Astrocyte of the cerebellum (primary cell): ENCODE measurements at regions of chr6 and their contacts with region 1.

Region 1: DNA sequence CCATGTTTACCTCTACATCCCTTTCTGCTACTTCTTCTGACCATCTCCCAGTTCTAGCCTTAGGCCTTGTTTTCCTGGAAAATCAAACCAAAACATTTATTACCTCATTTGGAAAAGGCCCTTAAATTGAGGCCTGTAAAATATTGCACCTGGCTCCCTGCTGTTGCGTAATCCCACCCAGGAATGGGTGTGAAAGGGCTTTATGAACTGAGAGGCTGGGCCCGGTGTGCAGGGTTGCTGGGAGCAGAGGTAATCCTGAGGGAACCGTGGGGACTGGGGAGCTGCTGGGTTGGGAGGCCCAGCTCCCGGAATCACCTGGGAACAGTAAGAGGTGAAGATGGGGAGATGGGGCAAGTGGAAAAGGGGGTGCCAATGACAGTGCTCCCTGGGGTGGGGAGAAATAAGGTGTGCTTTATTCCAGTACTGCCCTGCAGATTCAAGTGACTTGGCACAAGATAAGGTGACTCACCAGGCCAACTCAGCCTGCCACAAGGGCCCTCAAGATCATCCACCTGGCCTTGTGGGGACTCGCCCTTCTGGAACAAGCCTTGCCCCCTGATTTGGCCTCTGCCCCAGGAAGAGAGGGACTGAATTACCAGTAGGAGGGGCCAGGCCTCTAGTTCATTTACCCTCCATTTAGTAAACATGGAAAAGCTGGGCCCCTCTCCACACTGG is 44.2 kb downstream of the KCNK5 start:
- DNase-seq: no peak
- H3K4me3 ChIP-seq: no peak overlapping the region
- CTCF ChIP-seq: no peak

Region 2: GRCh38 chr6:39088331-39088730 is 96.7 kb before region 1 on chr6:
- in situ Hi-C with region 1: no loop called
- DNase-seq: peak; percentile 59
- H3K4me3 ChIP-seq: no peak overlapping the region
- CTCF ChIP-seq: peak; percentile 69

Region 3: DNA sequence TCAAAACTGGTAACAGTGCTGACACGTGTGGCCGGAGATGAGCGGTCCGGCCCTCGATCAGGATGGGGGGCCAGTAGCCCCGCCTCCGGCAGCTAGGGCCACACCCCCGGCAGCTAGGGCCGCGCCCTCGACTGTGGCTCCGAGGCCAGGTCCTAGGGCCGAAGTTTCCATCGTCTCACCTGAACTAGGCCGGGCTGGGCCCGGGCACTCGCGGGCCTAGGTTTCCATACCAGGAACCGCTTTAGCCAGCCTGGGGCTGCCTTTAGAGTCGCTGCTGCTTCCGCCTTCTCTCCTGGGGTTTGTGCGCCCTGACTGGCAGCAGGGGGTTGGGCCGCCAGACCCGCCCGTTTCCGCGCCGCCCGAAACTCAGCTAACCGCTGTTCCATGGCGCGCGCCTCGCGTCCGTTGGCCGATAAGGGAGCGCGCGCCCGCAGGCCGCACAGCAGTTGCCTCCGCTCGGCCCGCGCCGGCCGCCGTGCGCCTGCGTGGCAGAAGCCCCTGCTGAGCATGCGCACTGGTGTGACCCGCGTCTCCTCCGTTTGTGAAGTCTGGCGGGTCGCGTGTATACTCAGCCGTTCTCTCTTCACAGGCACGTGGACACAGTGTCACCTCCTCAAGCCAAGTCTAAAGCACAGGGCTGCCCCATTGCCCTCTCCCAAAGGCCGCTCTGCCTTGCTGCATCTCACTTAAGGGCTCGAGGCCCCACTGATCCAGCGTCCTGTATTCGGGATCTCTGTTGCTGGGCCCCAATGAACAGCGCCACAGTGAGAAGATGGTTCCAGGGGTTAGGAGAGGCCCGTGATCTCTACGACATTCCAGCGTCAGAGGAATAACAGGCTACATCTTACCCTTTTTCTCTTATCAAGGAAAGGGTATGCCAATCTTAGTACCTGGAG is 70.1 kb before region 1 on chr6 and contains the start of gene SAYSD1:
- in situ Hi-C with region 1: loop called (anchors 5 kb)
- DNase-seq: peak; percentile 69
- H3K4me3 ChIP-seq: peak within 1 kb of the TSS; percentile 78
- CTCF ChIP-seq: no peak

Region 4: GRCh38 chr6:39251406-39251805 is 66.4 kb after region 1 on chr6:
- in situ Hi-C with region 1: no loop called
- DNase-seq: no peak
- H3K4me3 ChIP-seq: no peak overlapping the region
- CTCF ChIP-seq: no peak

Region 5: GRCh38 chr6:39263303-39264037 is 78.4 kb after region 1 on chr6:
- in situ Hi-C with region 1: loop called (anchors 5 kb)
- DNase-seq: no peak
- H3K4me3 ChIP-seq: no peak overlapping the region
- CTCF ChIP-seq: no peak